PC-9 (cell line): ENCODE measurements at regions of chr7 and their contacts with region 1.

Region 1: GRCh38 chr7:80542421-80542820 is 30.6 kb upstream of the GNAT3 start:
- DNase-seq: peak; percentile 15 to 95
- H3K4me3 ChIP-seq: peak overlapping the region; percentile 20
- H3K27ac ChIP-seq: peak overlapping the region; percentile 74
- H3K4me1 ChIP-seq: peaks cover 17% of the 10 kb centered on the region
- H3K27me3 ChIP-seq: no peaks in the 10 kb centered on the region
- CTCF ChIP-seq: no peak

Region 2: GRCh38 chr7:80499350-80499953 is 43.0 kb before region 1 on chr7:
- CTCF ChIA-PET with region 1: no interaction called
- POLR2A ChIA-PET with region 1: interaction called, 6 read pairs
- intact Hi-C with region 1: loop called (anchors 1 kb)
- DNase-seq: peak; percentile 82 to 93
- H3K4me3 ChIP-seq: peak overlapping the region; percentile 1; the same call in 1 of the 2 replicates
- H3K27ac ChIP-seq: peak overlapping the region; percentile 69
- H3K4me1 ChIP-seq: peaks cover 25% of the 10 kb centered on the region
- H3K27me3 ChIP-seq: no peaks in the 10 kb centered on the region
- CTCF ChIP-seq: no peak